ENCODE measurements at regions of chr2 and their contacts with region 1.

Region 1: DNA sequence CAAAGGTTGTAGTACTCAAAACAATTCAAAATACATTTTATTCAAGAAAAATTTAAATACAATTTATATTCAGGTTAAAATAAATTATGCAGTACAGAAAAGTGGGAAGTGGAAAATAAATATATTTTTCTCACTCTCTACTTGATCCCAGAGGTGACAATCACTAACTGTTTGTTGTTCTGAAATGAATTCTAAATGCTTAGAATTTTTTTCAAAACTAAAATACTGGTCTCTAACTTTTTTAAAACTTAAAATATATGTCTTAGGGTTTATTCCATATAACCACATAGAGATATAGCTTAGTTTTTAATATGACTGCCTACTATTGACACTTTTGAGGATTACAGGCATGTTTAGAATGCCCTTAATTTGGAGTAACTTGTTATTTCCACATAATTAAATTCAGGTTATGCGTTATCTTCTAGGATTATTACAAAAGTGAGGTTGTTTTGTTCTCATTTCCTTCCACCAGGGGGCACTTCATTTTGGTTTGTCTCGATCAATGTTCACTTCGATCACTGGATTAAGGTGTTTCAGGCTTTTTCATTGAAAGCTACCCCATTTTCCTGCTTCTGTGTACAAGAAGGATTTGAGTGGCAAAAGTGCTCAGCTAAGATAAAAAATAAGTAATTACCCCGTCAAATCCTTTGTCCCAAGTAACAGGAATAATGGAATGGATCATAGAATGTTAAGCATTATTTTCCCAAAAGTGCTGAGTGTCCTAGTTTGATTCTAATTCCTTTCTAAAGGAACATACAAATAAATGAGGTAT is 27.1 kb upstream of the TFPI start:
- DNase-seq: peak; percentile 25
- ATAC-seq: no peak
- H3K4me3 Mint-ChIP-seq: no peak overlapping the region
- H3K27ac Mint-ChIP-seq: no peak overlapping the region
- H3K4me1 Mint-ChIP-seq: peaks cover 15% of the 10 kb centered on the region
- H3K27me3 Mint-ChIP-seq: peaks cover 3% of the 10 kb centered on the region

Region 2: DNA sequence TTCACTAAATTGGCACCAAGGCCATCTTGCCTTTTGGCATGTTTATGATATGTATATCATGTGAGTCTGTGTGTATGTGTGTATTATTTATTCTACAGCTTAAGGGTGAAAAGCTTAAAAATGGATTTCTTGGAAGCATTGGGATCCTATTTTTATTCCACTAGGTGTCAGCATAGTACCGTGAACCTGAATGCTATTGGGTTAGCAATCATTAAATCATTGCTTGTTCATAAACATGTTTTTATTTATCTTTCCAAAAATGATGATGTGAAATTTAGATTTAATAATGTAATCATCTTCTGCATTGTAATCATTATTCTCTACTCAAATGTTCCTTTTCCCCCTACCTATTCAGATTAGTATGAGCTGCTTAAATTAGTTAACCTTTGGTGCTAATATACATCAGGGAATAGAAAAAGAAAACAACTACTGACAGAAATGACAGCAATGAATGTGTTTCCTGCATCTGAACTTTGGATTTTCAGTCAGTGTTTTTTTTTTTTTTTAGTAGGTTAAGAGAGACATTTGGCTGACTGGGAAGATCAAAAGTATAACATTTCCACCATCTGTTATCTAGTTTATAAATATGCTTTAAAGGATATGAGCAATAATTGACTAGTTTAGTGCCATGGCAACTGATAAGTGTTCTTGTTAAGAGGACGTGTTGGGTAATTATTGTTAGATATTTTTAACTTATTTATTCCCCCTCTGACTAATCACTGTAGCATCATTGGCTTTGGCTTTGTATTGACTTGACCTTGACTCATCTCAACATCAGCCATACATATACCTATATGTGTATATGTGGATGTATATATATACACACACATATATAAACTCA is 718.2 kb before region 1 on chr2:
- CTCF ChIA-PET with region 1: no interaction called
- POLR2A ChIA-PET with region 1: no interaction called
- intact Hi-C with region 1: loop called in 1 of 2 experiments (anchors 5 kb)
- DNase-seq: no peak
- ATAC-seq: no peak
- H3K4me3 Mint-ChIP-seq: no peak overlapping the region
- H3K27ac Mint-ChIP-seq: no peak overlapping the region
- H3K4me1 Mint-ChIP-seq: no peaks in the 10 kb centered on the region
- H3K27me3 Mint-ChIP-seq: no peaks in the 10 kb centered on the region

Region 3: DNA sequence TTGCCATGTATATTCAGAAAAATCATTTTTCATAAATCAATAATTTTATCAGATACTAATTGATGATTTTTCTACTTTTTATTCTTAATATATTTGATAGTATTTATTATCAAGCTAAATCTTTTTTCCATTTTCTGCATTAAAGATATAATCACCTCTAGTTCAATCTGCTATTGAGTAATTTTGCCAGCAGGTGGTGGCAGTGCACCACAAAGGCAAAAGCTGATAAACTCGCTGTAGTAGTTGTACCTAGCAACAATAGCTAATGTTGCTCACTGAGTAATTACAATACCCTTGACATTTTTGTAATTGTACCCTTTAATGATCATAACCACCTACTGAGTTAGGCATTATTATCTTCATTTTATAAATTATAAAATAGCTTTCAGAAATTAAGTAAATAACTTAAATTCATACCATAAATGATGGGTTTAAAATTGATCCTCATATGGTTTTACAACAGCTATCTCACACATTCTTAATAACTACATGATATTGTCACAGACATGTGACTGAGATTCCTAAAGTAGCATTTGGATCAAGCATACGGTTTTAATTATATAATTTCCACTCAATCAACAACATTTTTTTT is 81.3 kb before region 1 on chr2:
- CTCF ChIA-PET with region 1: interaction called, 55 read pairs
- POLR2A ChIA-PET with region 1: no interaction called
- intact Hi-C with region 1: loop called (anchors 1 kb)
- DNase-seq: peak; percentile 73
- ATAC-seq: peak; percentile 44
- H3K4me3 Mint-ChIP-seq: no peak overlapping the region
- H3K27ac Mint-ChIP-seq: no peak overlapping the region
- H3K4me1 Mint-ChIP-seq: peaks cover 6% of the 10 kb centered on the region
- H3K27me3 Mint-ChIP-seq: peaks cover 2% of the 10 kb centered on the region

Region 4: GRCh38 chr2:187698374-187699110 is 117.2 kb after region 1 on chr2:
- CTCF ChIA-PET with region 1: no interaction called
- POLR2A ChIA-PET with region 1: no interaction called
- intact Hi-C with region 1: no loop called
- DNase-seq: no peak
- ATAC-seq: no peak
- H3K4me3 Mint-ChIP-seq: no peak overlapping the region
- H3K27ac Mint-ChIP-seq: no peak overlapping the region
- H3K4me1 Mint-ChIP-seq: no peaks in the 10 kb centered on the region
- H3K27me3 Mint-ChIP-seq: peaks cover 2% of the 10 kb centered on the region

Region 5: DNA sequence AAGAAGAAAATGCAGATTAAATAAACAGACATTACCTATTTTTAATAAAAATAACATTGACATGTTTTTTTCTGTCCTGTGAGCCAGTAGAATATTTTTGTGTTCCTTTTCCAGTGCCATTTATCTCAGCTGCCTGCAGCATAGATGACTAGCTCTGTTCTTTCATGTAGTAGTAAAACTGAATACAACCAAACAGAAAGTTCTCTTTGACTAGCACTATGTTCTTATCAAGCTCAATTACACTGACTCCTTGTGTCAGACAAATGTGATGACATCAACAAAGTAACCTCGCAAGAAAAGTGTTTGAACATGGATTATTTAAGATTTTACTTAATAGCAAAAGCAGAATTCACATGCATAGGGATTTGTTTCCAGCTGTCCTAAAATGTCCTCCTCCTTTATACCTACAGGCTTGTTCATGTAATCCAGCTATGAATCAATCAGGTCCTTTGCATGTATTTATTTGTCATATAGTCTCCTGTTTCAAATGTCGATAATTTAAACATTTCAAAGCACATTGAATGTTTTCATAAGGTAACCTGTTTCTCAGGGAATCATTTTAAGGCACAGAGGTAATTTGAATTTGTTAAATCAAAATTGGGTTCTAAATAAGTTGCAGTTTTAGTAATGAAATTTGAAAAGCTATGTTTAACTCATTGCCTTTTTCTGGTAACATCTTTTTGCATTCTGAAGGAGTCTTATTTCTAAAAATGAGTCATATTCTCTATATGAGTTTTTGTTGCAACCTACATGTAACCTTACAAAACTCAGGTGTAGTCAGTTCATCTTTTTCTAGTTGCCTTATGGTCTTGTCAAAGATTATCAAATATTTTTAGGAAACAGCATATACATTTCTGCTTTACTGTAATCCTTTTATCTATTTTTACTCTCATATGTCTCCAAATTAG is 495.1 kb after region 1 on chr2:
- CTCF ChIA-PET with region 1: no interaction called
- POLR2A ChIA-PET with region 1: no interaction called
- intact Hi-C with region 1: loop called in 1 of 2 experiments (anchors 10 kb)
- DNase-seq: no peak
- ATAC-seq: peak; percentile 78
- H3K4me3 Mint-ChIP-seq: no peak overlapping the region
- H3K27ac Mint-ChIP-seq: no peak overlapping the region
- H3K4me1 Mint-ChIP-seq: peaks cover 6% of the 10 kb centered on the region
- H3K27me3 Mint-ChIP-seq: no peaks in the 10 kb centered on the region

Region 6: DNA sequence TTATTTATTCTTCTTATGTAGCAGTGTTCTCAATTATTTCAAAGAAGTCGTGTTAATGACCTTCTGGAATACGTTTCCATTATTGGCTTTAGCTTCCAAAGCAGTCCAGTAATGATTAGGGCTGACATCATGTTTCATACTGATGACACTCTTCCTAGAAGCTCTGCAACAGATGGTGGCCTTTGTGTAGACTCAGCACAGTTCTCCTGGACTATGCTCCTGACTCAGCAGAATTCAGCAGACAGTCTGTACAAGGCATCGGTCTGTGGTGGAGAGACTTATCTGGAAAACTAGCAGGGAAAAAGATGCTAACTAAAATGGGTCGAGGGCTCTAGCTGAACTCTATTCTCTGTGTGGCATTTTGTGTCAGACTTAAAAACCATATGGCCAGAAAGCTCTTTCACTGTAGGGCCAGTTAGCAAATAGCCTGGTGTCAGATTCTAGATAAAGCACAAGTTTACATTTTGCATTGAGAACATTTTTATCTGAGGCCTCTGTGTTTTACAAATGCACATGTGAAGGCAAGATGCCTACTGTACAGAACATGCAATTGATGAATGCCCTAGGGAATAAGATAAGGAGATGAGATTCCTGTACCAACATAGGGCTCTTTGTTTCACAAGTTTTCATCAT is 745.5 kb after region 1 on chr2:
- CTCF ChIA-PET with region 1: no interaction called
- POLR2A ChIA-PET with region 1: no interaction called
- intact Hi-C with region 1: no loop called
- DNase-seq: no peak
- ATAC-seq: no peak
- H3K4me3 Mint-ChIP-seq: no peak overlapping the region
- H3K27ac Mint-ChIP-seq: no peak overlapping the region
- H3K4me1 Mint-ChIP-seq: no peaks in the 10 kb centered on the region
- H3K27me3 Mint-ChIP-seq: no peaks in the 10 kb centered on the region

Region 7: DNA sequence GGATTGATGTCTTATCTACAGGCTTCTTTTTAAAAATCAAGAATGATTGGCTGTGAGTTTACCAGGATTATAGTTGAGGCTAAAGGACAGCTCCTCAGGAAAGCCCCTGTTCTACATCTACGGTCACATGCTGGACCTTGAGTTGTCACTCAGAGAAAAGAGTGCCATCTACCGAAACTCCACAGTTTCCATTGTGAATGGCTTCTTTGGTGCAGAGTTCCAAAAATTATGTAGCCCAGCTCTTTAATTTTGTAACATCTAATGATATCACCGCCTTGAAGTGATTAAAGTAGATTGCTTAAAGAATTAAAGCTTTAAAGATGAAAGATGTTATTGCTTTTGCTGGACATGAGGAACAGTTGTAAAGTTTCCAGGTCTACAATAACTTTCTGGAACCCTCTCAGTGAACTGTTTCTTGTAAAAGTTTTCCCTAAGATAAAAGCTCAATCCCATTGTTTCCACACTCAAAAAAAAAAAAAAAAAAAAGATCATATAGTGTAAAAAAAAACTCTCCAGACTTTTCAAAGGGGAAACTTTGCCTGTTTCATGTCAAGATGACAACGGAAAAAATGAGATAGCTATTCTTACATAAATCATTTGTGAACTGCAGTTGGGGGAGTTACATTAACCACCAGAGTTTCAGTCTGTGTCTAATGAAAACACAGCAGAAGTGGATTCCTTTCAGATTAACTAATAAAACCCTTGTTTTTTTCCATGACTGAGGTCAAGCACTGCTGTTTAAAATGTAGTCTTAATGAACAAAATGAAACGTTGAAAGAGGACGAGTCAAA is 1397.2 kb after region 1 on chr2:
- CTCF ChIA-PET with region 1: no interaction called
- POLR2A ChIA-PET with region 1: no interaction called
- intact Hi-C with region 1: loop called in 1 of 2 experiments (anchors 5 kb)
- DNase-seq: no peak
- ATAC-seq: peak; percentile 82
- H3K4me3 Mint-ChIP-seq: peak overlapping the region; percentile 49
- H3K27ac Mint-ChIP-seq: peak overlapping the region; percentile 68
- H3K4me1 Mint-ChIP-seq: peaks cover 16% of the 10 kb centered on the region
- H3K27me3 Mint-ChIP-seq: peaks cover 12% of the 10 kb centered on the region

Region 8: GRCh38 chr2:189440947-189441708 is 1859.8 kb after region 1 on chr2 and contains the start of gene WDR75:
- CTCF ChIA-PET with region 1: no interaction called
- POLR2A ChIA-PET with region 1: no interaction called
- intact Hi-C with region 1: loop called in 1 of 2 experiments (anchors 10 kb)
- DNase-seq: peak; percentile 95
- ATAC-seq: peak; percentile 91
- H3K4me3 Mint-ChIP-seq: no peak within 1 kb of the TSS
- H3K27ac Mint-ChIP-seq: peak within 1 kb of the TSS; percentile 99
- H3K4me1 Mint-ChIP-seq: peaks cover 20% of the 10 kb centered on the region
- H3K27me3 Mint-ChIP-seq: no peaks in the 10 kb centered on the region
- total RNA-seq, gene WDR75: 82.1 to 82.3 TPM

Measured in activated CD4-positive, alpha-beta T cell treated with anti-CD3 and anti-CD28 coated beads for 36 hours (primary cell).